ENCODE measurements at regions of chr2 and their contacts with region 1.

Region 1: GRCh38 chr2:129396980-129397599 is 582.4 kb upstream of the RAB6C start:
- DNase-seq: no peak
- H3K4me3 ChIP-seq: no peak overlapping the region
- H3K27ac ChIP-seq: no peak overlapping the region
- H3K4me1 ChIP-seq: no peaks in the 10 kb centered on the region
- H3K27me3 ChIP-seq: no peaks in the 10 kb centered on the region
- CTCF ChIP-seq: peak; percentile 36 to 47 (median 42)
- EP300 ChIP-seq: no peak
- POLR2A ChIP-seq: no peak

Region 2: GRCh38 chr2:128736689-128737545 is 660.2 kb before region 1 on chr2:
- in situ Hi-C with region 1: loop called in 1 of 4 experiments (anchors 25 kb)
- intact Hi-C with region 1: no loop called
- DNase-seq: peak; percentile 69
- H3K4me3 ChIP-seq: peak overlapping the region in 2 of 4 donors; percentile 8 to 37
- H3K27ac ChIP-seq: no peak overlapping the region
- H3K4me1 ChIP-seq: peaks cover 0 to 16% (median 6%) of the 10 kb centered on the region in 4 donors
- H3K27me3 ChIP-seq: no peaks in the 10 kb centered on the region
- CTCF ChIP-seq: peak; percentile 84 to 99 (median 98)
- EP300 ChIP-seq: no peak
- POLR2A ChIP-seq: no peak

Region 3: GRCh38 chr2:129849559-129850160 is 452.6 kb after region 1 on chr2:
- in situ Hi-C with region 1: no loop called
- intact Hi-C with region 1: no loop called
- DNase-seq: no peak
- H3K4me3 ChIP-seq: no peak overlapping the region
- H3K27ac ChIP-seq: no peak overlapping the region
- H3K4me1 ChIP-seq: no peaks in the 10 kb centered on the region
- H3K27me3 ChIP-seq: no peaks in the 10 kb centered on the region
- CTCF ChIP-seq: peak; percentile 63 to 78 (median 72)
- EP300 ChIP-seq: no peak
- POLR2A ChIP-seq: no peak